ENCODE measurements at regions of chr5 and their contacts with region 1.

Region 1: GRCh38 chr5:119411935-119412602 is 40.2 kb upstream of the HSD17B4 start:
- DNase-seq: peak; percentile 16 to 87 (median 58)

Region 2: GRCh38 chr5:119274767-119275130 is 137.3 kb before region 1 on chr5:
- intact Hi-C with region 1: loop called (anchors 10 kb)
- DNase-seq: no peak

Region 3: GRCh38 chr5:119578937-119579336 is 166.9 kb after region 1 on chr5:
- intact Hi-C with region 1: no loop called
- DNase-seq: no peak